ENCODE measurements at regions of chr11 and their contacts with region 1.

Region 1: DNA sequence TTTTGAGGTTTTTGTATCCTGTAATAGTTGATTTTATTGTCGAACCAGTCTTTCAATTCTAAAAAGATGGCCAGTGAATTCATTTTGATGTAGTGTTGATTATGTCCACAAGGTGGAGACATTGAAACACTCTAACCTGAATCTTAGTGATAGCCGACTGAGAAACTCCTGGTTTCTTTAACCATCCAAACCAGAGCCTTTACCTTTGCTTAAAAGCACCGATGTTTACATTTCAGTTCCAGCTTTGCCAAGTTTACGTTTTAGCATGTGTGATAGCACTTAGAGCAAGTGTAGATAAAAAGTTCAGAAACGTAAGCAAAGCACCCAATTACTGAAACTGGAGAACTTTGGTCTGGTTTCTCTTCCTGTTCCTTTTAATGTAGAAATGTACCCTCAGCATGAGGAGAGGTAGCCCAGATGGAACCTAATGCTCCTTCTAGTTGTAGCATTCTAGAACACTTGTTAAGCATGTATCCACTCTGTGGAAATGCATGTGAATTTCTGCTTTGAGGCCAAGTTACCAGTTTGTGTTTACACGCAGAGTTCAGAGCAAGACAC is 208.6 kb downstream of the DBX1 start:
- DNase-seq: peak; percentile 70
- ATAC-seq: peak; percentile 23
- H3K4me3 ChIP-seq: peak overlapping the region; percentile 20 to 47 (median 36); a peak in 2 of 6 replicates
- H3K27ac ChIP-seq: peak overlapping the region; percentile 47
- H3K4me1 ChIP-seq: peaks cover 60% of the 10 kb centered on the region
- H3K27me3 ChIP-seq: no peaks in the 10 kb centered on the region
- CTCF ChIP-seq: peak; percentile 82
- EP300 ChIP-seq: no peak
- POLR2A ChIP-seq: no peak
- RAD21 ChIP-seq: peak; percentile 68

Region 2: GRCh38 chr11:19160847-19161246 is 790.8 kb before region 1 on chr11:
- CTCF ChIA-PET with region 1: no interaction called
- POLR2A ChIA-PET with region 1: no interaction called
- in situ Hi-C with region 1: no loop called
- intact Hi-C with region 1: no loop called
- DNase-seq: no peak
- ATAC-seq: no peak
- H3K4me3 ChIP-seq: no peak overlapping the region
- H3K27ac ChIP-seq: no peak overlapping the region
- H3K4me1 ChIP-seq: no peaks in the 10 kb centered on the region
- H3K27me3 ChIP-seq: no peaks in the 10 kb centered on the region; a peak in 1 of 5 replicates
- CTCF ChIP-seq: no peak
- EP300 ChIP-seq: no peak
- POLR2A ChIP-seq: no peak
- RAD21 ChIP-seq: no peak

Region 3: DNA sequence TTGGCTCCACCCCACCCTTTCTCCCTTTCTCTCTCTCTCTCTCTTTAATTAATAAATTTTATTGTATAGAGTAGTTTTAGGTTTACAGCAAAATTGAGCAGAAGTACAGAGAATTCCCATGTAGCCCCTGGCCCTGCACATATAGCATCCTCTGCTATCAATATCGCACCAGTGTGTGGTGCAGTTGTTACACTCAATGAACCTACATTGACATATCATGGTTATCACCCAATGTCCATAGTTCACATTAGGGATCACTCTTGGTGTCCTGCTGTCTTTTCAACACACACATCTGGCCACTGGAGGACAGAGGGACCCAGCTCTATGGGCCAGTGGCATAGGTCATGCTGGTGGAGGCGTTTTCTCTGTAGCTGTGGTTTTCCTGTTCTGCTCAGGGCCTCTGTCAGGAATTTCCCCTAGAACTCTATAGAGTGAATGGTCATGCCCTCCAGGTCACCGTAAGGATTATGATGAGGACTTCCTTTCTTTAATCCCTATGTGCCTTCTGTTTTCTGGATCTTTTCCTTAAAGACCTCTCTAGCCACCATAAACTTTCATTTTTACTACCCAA is 337.2 kb before region 1 on chr11:
- CTCF ChIA-PET with region 1: no interaction called
- POLR2A ChIA-PET with region 1: no interaction called
- in situ Hi-C with region 1: no loop called
- intact Hi-C with region 1: no loop called
- DNase-seq: no peak
- ATAC-seq: no peak
- H3K4me3 ChIP-seq: no peak overlapping the region
- H3K27ac ChIP-seq: no peak overlapping the region
- H3K4me1 ChIP-seq: no peaks in the 10 kb centered on the region
- H3K27me3 ChIP-seq: peaks cover 0 to 4% of the 10 kb centered on the region in 2 experiments; a peak in 1 of 5 replicates
- CTCF ChIP-seq: no peak
- EP300 ChIP-seq: no peak
- POLR2A ChIP-seq: no peak
- RAD21 ChIP-seq: no peak

Region 4: DNA sequence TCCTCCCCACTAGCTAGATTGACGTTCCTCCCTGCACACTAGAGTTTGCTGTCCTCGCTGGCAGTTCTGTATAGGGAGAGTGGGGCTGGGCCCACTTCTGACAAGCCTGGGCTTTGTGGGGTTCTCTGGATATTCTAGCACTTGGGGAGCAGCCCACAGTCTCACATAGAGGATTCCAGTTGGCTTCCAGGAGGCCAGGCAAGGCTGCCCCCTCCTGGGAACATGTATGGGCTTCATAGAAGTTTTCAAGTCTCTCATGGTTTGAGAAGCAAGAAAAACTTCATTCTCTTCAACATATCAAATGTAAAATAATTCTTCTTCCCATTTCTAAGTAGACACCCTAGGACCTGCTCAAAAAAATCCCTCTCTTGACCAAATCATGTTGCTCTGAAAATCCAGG is 151.5 kb before region 1 on chr11:
- CTCF ChIA-PET with region 1: no interaction called
- POLR2A ChIA-PET with region 1: no interaction called
- in situ Hi-C with region 1: no loop called
- intact Hi-C with region 1: no loop called
- DNase-seq: no peak
- ATAC-seq: no peak
- H3K4me3 ChIP-seq: no peak overlapping the region
- H3K27ac ChIP-seq: no peak overlapping the region
- H3K4me1 ChIP-seq: no peaks in the 10 kb centered on the region
- H3K27me3 ChIP-seq: peaks cover 0 to 14% of the 10 kb centered on the region in 2 experiments; a peak in 2 of 5 replicates
- CTCF ChIP-seq: no peak
- EP300 ChIP-seq: no peak
- POLR2A ChIP-seq: no peak
- RAD21 ChIP-seq: no peak

Region 5: DNA sequence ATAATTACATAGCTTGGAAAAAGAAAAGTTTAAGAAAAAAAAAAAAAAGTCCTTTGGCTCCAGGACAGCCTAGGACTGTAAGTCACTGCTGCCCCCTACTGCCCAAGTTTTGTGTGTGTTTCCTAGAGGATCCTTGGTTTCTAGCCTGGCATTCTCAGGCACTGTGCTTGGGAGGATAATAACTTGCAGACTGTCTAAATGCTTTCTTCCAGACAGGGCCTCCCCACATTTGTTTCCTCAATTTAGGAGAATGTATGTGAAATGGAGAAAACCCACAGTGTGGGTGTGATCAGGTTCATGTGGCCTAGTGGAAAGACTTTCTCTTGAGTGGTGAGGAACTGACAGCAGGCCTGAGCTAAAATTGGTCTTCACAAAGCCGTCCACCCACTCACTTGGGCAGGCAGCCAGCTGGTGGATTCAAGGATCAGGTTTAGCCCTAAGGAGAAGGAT is 48.0 kb before region 1 on chr11:
- CTCF ChIA-PET with region 1: interaction called, 14 read pairs
- POLR2A ChIA-PET with region 1: interaction called, 4 read pairs
- in situ Hi-C with region 1: no loop called
- intact Hi-C with region 1: loop called (anchors 1 kb)
- DNase-seq: peak; percentile 60
- ATAC-seq: peak; percentile 64
- H3K4me3 ChIP-seq: no peak overlapping the region
- H3K27ac ChIP-seq: no peak overlapping the region
- H3K4me1 ChIP-seq: peaks cover 34% of the 10 kb centered on the region
- H3K27me3 ChIP-seq: peaks cover 0 to 10% of the 10 kb centered on the region in 2 experiments; a peak in 2 of 5 replicates
- CTCF ChIP-seq: peak; percentile 83
- EP300 ChIP-seq: no peak
- POLR2A ChIP-seq: no peak
- RAD21 ChIP-seq: no peak; the same call in 1 of the 2 replicates

Region 6: GRCh38 chr11:19978668-19979518 is 27.3 kb after region 1 on chr11:
- CTCF ChIA-PET with region 1: no interaction called
- POLR2A ChIA-PET with region 1: interaction called, 30 read pairs
- in situ Hi-C with region 1: no loop called
- intact Hi-C with region 1: loop called (anchors 1 kb)
- DNase-seq: peak; percentile 88
- ATAC-seq: peak; percentile 51
- H3K4me3 ChIP-seq: peak overlapping the region; percentile 53 to 58 (median 56)
- H3K27ac ChIP-seq: peak overlapping the region; percentile 72
- H3K4me1 ChIP-seq: peaks cover 83% of the 10 kb centered on the region
- H3K27me3 ChIP-seq: no peaks in the 10 kb centered on the region
- CTCF ChIP-seq: no peak
- EP300 ChIP-seq: peak in 1 of 2 experiments; percentile 94; a peak in 3 of 4 replicates
- POLR2A ChIP-seq: peak; percentile 29 to 44; a peak in 1 of 4 replicates
- RAD21 ChIP-seq: no peak

Region 7: DNA sequence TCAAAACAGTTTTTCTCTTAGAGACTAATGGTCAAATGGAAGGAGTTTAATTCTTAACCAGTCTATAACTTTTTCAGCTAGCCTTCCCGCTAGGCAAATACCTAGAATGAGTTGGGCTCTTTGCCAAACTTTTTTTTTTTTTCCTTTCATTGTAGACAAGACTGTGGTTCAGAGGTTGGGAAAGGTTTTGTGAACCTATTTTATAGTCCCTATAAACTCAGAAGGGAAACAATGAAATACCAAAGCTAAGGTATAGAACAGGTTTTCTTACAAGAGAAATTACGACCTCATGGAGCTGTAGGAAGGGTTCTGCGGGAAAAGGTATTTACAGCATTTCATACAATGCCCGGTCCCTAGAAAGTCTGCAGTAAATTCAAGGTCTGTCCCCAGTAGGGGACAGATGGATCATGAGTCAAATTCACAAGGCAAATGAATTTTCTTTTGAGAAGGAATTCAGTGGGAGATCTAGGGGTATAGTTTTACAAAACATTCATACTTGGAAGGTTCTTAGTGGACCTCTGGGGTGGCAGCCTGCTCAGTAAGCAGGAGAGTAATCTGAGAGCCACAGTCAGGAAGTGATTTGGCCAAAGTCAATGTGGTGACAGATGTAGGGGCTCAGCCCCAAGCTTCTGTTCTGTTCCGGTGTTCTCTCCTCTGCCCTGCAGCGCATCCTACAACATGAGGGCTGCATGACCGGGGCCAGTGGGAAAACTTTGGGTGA is 61.9 kb after region 1 on chr11:
- CTCF ChIA-PET with region 1: no interaction called
- POLR2A ChIA-PET with region 1: interaction called, 11 read pairs
- in situ Hi-C with region 1: no loop called
- intact Hi-C with region 1: no loop called
- DNase-seq: peak; percentile 73
- ATAC-seq: peak; percentile 80
- H3K4me3 ChIP-seq: peak overlapping the region in 1 of 3 experiments; percentile 27; a peak in 3 of 6 replicates
- H3K27ac ChIP-seq: peak overlapping the region; percentile 68
- H3K4me1 ChIP-seq: peaks cover 93% of the 10 kb centered on the region
- H3K27me3 ChIP-seq: no peaks in the 10 kb centered on the region
- CTCF ChIP-seq: no peak
- EP300 ChIP-seq: peak in 1 of 2 experiments; percentile 49; a peak in 1 of 4 replicates
- POLR2A ChIP-seq: no peak
- RAD21 ChIP-seq: no peak

Region 8: GRCh38 chr11:20089796-20090653 is 138.4 kb after region 1 on chr11:
- CTCF ChIA-PET with region 1: no interaction called
- POLR2A ChIA-PET with region 1: no interaction called
- in situ Hi-C with region 1: no loop called
- intact Hi-C with region 1: loop called (anchors 1 kb)
- DNase-seq: peak; percentile 32
- ATAC-seq: no peak
- H3K4me3 ChIP-seq: no peak overlapping the region
- H3K27ac ChIP-seq: peak overlapping the region; percentile 20
- H3K4me1 ChIP-seq: peaks cover 41% of the 10 kb centered on the region
- H3K27me3 ChIP-seq: no peaks in the 10 kb centered on the region
- CTCF ChIP-seq: no peak
- EP300 ChIP-seq: no peak
- POLR2A ChIP-seq: no peak
- RAD21 ChIP-seq: no peak

Region 9: DNA sequence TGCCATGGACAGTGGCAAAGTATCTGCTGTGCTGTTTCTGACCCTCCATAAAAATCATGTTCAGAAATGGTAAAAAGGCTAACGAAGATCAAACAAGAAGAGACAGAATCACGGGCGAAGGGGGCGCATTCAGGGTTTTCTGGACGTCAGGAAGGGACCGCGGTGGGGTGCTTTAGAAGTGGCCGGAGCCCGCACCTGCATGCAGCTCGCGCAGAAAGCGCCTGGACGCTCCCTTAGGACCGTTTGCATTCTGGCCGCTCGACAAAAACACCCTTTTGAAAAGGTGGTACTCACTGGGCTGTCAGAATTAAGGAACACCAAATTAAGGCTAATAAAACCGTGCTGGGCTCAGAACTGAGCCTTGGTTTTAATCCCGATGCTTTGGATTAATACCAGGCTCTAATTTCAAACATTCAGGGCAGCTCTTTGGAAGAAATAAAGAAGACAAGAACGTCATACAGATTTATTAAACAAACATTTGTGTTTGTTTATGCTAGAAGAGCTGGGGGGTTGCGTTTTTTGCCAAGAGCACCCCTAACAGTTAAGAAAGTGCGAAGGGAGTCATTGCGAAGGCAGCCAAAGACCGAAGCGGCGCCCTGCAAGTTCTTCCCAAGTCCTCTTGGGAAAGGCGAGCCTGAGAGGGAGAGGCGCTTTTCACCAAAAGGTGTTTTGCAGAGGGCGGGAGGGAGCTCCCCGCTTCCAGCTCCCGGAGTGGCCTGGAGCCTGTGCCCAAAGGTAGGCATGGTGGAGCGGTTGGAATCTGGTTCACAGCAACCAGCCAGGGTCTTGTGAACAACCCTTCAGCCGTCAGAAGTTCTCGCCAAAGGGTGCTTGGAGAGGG is 256.4 kb after region 1 on chr11:
- CTCF ChIA-PET with region 1: no interaction called
- POLR2A ChIA-PET with region 1: no interaction called
- in situ Hi-C with region 1: no loop called
- intact Hi-C with region 1: no loop called
- DNase-seq: no peak
- ATAC-seq: no peak
- H3K4me3 ChIP-seq: no peak overlapping the region
- H3K27ac ChIP-seq: no peak overlapping the region
- H3K4me1 ChIP-seq: no peaks in the 10 kb centered on the region
- H3K27me3 ChIP-seq: peaks cover 4 to 45% of the 10 kb centered on the region in 2 experiments
- CTCF ChIP-seq: no peak
- EP300 ChIP-seq: no peak
- POLR2A ChIP-seq: no peak
- RAD21 ChIP-seq: no peak

Region 10: DNA sequence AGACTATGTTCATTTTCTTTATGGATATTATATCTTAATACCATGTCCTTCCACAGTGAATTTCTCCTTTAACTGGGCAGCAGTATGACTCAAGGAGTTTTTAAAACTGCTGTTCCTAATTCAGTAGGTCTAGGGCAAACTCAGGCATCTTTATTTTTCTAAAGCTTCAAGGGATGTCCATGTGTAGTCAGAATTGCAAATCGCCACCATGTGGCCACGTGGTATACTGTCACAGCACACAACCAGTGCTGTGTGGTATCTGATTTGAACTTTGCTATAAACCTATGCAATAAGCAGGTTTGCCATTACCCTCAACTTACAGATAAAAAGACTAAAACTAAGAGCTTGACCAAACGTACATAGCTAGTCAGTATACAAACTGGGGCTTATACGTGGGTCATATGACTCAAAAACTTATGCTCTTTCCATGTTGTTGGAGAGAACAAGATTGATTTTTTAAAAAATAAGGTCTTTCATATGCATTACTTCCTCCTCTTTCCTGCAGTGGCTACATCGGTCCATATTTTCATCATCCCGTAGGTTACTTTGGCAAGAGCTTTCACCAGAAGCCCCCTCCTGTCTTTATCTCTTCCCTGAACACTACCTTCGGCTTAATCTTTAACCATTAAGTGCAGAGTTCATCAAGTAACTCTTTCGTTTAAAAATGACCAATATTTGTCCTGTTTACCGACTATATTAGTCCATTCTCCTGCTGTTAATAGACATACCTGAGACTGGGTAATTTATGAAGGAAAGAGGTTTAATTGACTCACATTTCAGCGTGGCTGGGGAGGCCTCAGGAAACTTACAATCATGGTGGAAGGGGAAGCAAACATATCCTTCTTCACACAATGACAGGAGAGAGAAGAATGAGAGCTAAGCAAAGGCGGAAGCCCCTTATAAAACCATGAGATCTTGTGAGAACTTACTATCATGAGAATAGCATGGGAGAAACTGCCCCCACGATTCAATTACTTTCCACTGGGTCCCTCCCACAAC is 403.9 kb after region 1 on chr11:
- CTCF ChIA-PET with region 1: no interaction called
- POLR2A ChIA-PET with region 1: no interaction called
- in situ Hi-C with region 1: loop called (anchors 10 kb)
- intact Hi-C with region 1: no loop called
- DNase-seq: peak; percentile 78
- ATAC-seq: peak; percentile 93
- H3K4me3 ChIP-seq: peak overlapping the region in 2 of 3 experiments; percentile 34 to 46; a peak in 2 of 6 replicates
- H3K27ac ChIP-seq: peak overlapping the region; percentile 25
- H3K4me1 ChIP-seq: peaks cover 49% of the 10 kb centered on the region
- H3K27me3 ChIP-seq: no peaks in the 10 kb centered on the region
- CTCF ChIP-seq: peak; percentile 63
- EP300 ChIP-seq: no peak
- POLR2A ChIP-seq: no peak
- RAD21 ChIP-seq: no peak

Measured in HepG2 (cell line).